Activated CD4-positive, alpha-beta memory T cell treated with anti-CD3 and anti-CD28 coated beads, Interleukin-2, amount 10 ng/mL, durations not matched to agents 7 days and 5 days (primary cell): ENCODE measurements at regions of chr17 and their contacts with region 1.

Region 1: DNA sequence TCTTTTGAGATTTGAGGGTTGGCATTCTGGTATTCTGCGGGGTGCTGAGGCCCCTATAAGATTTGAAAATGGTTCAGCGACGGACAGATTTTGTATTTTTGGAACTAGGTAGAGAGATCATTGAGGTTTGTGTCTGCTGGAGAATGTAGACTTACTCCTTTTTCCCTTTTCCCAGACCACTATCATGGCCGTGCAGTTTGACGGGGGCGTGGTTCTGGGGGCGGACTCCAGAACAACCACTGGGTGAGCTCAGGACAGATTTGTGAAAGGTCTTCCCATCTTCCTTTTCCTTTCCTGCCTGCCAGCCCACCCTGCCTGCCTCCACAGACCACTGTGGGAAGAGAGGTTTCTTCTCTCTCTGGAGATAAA is 573 bp downstream of the PSMB6 start:
- DNase-seq: peak; percentile 30
- H3K4me3 Mint-ChIP-seq: peak overlapping the region; percentile 98
- H3K27ac Mint-ChIP-seq: peak overlapping the region; percentile 91
- H3K4me1 Mint-ChIP-seq: peaks cover 18% of the 10 kb centered on the region
- H3K27me3 Mint-ChIP-seq: peaks cover 2% of the 10 kb centered on the region

Region 2: DNA sequence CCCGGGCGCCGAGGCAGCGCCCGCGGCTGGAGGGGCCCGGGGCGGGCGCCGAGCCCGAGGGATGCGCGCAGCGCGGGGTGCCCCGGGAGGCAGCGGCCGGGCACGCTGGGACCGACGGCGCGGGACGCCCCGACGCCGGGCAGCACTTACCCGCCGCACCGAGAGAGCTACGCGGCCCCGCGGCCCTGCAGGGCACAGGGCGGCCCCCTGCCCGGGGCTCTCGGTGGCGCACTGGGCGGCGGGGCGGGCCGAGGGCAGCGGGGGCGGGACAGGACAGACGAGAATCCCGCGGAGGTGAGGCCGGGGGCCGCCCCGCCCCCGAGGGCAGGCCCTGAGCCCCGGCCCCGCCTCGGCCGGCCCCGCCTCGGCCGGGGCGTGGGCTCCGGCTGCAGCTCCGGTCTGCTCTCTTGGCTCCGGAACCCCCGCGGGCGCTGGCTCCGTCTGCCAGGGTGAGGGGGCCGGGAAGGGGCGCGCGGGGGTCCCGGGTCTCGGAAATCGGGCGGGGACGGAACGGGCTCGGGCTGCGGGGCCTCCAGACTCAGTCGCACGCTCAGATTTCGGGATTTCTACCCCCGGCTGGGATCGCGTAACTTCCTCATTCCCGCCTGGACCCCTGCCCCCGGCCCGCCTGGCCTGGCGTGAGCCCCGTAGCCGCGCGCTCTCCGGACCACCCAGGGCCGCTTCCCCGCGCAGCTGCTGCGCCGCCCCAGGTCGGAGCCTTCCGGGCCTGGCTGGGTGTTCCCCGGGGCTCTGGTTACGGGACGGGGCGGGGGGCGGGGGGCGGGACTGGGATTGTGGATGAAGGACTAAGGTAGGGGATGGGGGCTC is 10.5 kb after region 1 on chr17 and contains the start of gene PLD2:
- CTCF ChIA-PET with region 1: interaction called, 4 read pairs
- POLR2A ChIA-PET with region 1: interaction called, 17 read pairs
- DNase-seq: peak; percentile 88
- H3K4me3 Mint-ChIP-seq: peak within 1 kb of the TSS; percentile 74
- H3K27ac Mint-ChIP-seq: no peak within 1 kb of the TSS
- H3K4me1 Mint-ChIP-seq: peaks cover 23% of the 10 kb centered on the region
- H3K27me3 Mint-ChIP-seq: no peaks in the 10 kb centered on the region
- total RNA-seq, gene PLD2: 17.4 to 20.7 TPM

Region 3: DNA sequence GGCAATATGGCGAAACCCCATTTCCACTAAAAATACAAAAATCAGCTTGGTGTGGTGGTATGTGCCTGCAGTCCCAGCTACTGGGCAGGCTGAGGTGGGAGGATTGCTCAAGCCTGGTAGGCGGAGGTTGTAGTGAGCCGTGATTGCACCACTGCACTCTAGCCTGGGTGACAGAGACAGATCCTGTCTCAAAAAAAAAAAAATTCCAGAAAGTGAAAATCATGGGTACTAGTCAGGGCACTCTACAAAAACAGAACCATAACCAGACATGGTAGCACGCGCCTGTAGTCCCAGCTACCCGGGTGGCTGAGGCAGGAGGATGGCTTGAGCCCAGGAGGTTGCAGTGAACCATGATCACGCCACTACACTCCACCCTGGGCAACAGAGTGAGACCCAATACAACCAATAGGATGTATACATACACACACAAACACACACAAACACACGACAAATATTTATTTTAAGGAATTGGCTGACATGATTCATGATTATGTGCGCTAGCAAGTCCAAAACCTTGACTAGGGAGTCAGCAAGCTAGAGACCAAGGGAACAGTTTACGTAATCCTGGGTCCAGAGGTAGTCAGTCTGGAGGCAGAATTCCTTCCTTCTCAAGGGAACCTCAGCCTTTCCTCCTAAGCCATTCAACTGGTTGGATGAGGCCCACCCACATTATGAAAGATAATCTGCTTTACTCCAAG is 124.0 kb after region 1 on chr17:
- CTCF ChIA-PET with region 1: no interaction called
- POLR2A ChIA-PET with region 1: no interaction called
- DNase-seq: no peak
- H3K4me3 Mint-ChIP-seq: no peak overlapping the region
- H3K27ac Mint-ChIP-seq: no peak overlapping the region
- H3K4me1 Mint-ChIP-seq: no peaks in the 10 kb centered on the region
- H3K27me3 Mint-ChIP-seq: peaks cover 2% of the 10 kb centered on the region